B cell (primary cell): ENCODE measurements at regions of chr16 and their contacts with region 1.

Region 1: DNA sequence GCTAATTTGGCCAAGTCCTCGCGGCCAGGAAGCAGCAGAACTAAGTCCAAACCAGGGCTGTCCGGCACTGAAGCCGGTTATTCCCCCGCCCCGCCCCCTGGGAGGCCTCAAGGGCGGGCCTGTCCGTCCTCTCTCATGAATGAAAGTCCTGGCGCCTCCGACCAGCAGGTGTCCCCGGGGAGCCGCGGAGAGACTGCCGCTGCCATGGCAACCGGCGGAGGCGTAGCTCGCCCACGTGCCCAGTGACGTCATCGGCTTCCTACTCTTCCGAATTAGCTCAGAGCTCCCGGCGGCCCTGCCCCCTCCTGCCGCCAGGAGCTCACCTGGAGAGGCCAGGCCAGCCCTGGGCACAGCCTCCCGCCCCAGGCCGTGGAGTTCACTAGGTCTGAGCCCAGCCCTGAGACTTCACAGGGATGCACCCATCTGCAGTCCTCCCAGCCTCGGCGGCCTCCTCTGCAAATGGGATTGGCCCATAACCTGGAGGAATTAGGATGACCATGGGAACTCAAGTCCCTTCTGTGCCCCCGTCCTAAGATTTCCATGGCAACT is 1.3 kb downstream of the SPATA2L start:
- DNase-seq: peak; percentile 99
- ATAC-seq: peak; percentile 38
- H3K4me3 ChIP-seq: peak overlapping the region; percentile 17 to 73 (median 68)
- H3K4me3 Mint-ChIP-seq: peak overlapping the region; percentile 85
- H3K27ac ChIP-seq: peak overlapping the region; percentile 76 to 82
- H3K27ac Mint-ChIP-seq: peak overlapping the region; percentile 83
- H3K4me1 ChIP-seq: peaks cover 21 to 29% of the 10 kb centered on the region in 2 donors
- H3K4me1 Mint-ChIP-seq: peaks cover 21% of the 10 kb centered on the region
- H3K27me3 ChIP-seq: no peaks in the 10 kb centered on the region
- H3K27me3 Mint-ChIP-seq: no peaks in the 10 kb centered on the region
- CTCF ChIP-seq: peak; percentile 74

Region 2: GRCh38 chr16:89084411-89084810 is 615.8 kb before region 1 on chr16:
- CTCF ChIA-PET with region 1: no interaction called
- POLR2A ChIA-PET with region 1: no interaction called
- intact Hi-C with region 1: no loop called
- DNase-seq: no peak
- ATAC-seq: no peak
- H3K4me3 ChIP-seq: no peak overlapping the region
- H3K4me3 Mint-ChIP-seq: peak overlapping the region; percentile 73
- H3K27ac ChIP-seq: no peak overlapping the region
- H3K27ac Mint-ChIP-seq: peak overlapping the region; percentile 88
- H3K4me1 ChIP-seq: peaks cover 4 to 7% of the 10 kb centered on the region in 2 donors
- H3K4me1 Mint-ChIP-seq: peaks cover 13% of the 10 kb centered on the region
- H3K27me3 ChIP-seq: peaks cover 0 to 7% (median 2%) of the 10 kb centered on the region in 4 experiments
- H3K27me3 Mint-ChIP-seq: peaks cover 6% of the 10 kb centered on the region
- CTCF ChIP-seq: no peak

Region 3: DNA sequence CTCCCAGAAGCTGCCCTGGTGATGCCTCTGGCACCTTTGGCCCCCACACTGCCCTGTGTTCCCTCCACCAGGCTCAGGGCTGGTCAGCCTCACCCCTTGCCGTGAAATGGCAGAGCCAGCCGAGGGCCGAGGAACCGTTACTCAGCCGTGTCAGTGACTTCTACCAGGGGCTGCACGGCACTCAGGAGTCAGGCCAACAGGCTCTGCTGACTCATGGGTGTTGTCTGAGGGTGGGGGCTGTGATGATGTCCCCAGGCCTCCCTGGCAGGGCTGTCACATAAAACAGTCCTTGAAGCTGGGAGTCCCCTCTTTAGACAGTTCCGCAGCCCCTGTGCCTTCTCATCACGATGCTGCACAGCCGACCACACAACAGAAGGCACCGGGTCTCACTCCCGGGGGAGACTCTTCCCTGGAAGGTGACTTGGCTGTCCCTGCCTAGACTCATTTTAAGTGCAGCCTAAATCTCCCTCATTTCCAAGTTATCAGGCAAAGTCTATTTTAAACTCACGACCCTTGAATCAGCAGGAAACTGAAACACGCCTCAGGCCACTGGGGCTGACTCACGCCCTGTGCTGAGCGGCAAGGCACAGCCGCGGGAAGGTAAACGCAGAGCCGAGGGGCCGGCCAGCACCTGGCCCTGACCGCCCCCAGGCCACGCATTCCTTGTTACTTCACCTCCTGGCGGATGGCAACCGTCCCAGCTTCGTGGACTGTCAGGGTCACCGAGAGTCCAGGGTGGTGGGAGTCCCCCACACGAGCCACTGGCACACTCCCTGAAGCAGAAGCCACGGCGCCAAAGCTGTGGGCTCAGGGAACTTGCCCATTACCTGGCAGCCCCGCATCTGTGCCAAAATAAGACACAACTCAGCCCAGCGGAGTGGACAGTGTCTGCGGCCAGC is 380.0 kb before region 1 on chr16:
- CTCF ChIA-PET with region 1: no interaction called
- POLR2A ChIA-PET with region 1: no interaction called
- intact Hi-C with region 1: no loop called
- DNase-seq: no peak
- ATAC-seq: no peak
- H3K4me3 ChIP-seq: no peak overlapping the region
- H3K4me3 Mint-ChIP-seq: peak overlapping the region; percentile 66
- H3K27ac ChIP-seq: no peak overlapping the region
- H3K27ac Mint-ChIP-seq: peak overlapping the region; percentile 50
- H3K4me1 ChIP-seq: peaks cover 45 to 83% of the 10 kb centered on the region in 2 donors
- H3K4me1 Mint-ChIP-seq: peaks cover 90% of the 10 kb centered on the region
- H3K27me3 ChIP-seq: no peaks in the 10 kb centered on the region
- H3K27me3 Mint-ChIP-seq: no peaks in the 10 kb centered on the region
- CTCF ChIP-seq: no peak

Region 4: DNA sequence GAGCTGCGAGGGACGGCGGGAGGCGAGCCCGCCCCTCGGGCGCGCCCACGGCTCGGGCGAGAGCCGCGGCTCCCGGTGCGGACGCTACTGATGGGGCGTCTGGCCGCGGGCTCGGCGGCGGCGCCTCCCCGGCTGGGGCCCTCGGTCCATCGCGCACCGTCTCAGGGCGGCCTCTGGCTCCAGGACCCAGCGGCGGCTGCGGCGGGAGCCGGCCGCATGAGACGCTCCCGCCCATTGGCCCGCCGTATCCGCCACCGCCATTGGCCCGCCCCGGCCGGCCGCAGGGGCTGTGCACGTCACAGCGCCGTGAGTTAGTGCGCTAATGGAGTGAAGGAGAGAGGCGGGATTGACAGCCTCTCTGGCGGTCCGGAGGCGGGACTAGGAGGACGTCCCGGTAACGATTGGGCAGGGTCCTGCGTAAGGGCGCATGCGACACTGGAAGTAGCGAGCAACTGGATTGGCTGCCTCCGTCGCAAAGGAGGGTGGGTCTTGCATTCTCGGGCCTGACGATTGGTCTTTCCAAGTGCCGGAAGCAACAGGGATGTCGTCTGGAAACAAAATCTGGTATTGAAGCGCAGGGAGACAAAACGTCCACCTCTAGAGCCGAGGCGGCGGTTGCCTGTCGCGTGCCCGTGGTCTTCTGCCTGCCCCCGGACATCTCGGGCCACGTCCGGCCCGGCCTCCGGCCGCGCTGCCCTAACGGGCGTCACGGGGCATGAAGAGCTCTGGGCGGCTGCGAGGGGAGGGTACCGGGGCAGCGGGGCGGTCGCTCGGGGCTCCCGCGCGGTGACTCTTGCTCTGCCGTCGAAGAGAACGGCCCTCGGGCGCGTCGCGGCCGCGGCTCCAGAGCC is 209.6 kb before region 1 on chr16 and contains the start of gene ANKRD11:
- CTCF ChIA-PET with region 1: no interaction called
- POLR2A ChIA-PET with region 1: interaction called, 3 read pairs
- intact Hi-C with region 1: loop called (anchors 5 kb)
- DNase-seq: peak; percentile 99
- ATAC-seq: peak; percentile 81
- H3K4me3 ChIP-seq: peak within 1 kb of the TSS; percentile 59 to 93 (median 86)
- H3K4me3 Mint-ChIP-seq: peak within 1 kb of the TSS; percentile 93
- H3K27ac ChIP-seq: peak within 1 kb of the TSS; percentile 91 to 97
- H3K27ac Mint-ChIP-seq: peak within 1 kb of the TSS; percentile 97
- H3K4me1 ChIP-seq: peaks cover 41 to 46% of the 10 kb centered on the region in 2 donors
- H3K4me1 Mint-ChIP-seq: peaks cover 56% of the 10 kb centered on the region
- H3K27me3 ChIP-seq: no peaks in the 10 kb centered on the region
- H3K27me3 Mint-ChIP-seq: no peaks in the 10 kb centered on the region
- CTCF ChIP-seq: no peak
- total RNA-seq, gene ANKRD11: 314 and 320 TPM in 2 replicates

Region 5: GRCh38 chr16:89545831-89546574 is 154.2 kb before region 1 on chr16:
- CTCF ChIA-PET with region 1: no interaction called
- POLR2A ChIA-PET with region 1: no interaction called
- intact Hi-C with region 1: no loop called
- DNase-seq: no peak
- ATAC-seq: no peak
- H3K4me3 ChIP-seq: no peak overlapping the region
- H3K4me3 Mint-ChIP-seq: no peak overlapping the region
- H3K27ac ChIP-seq: no peak overlapping the region
- H3K27ac Mint-ChIP-seq: no peak overlapping the region
- H3K4me1 ChIP-seq: peaks cover 0 to 3% of the 10 kb centered on the region in 2 donors
- H3K4me1 Mint-ChIP-seq: peaks cover 2% of the 10 kb centered on the region
- H3K27me3 ChIP-seq: no peaks in the 10 kb centered on the region
- H3K27me3 Mint-ChIP-seq: no peaks in the 10 kb centered on the region
- CTCF ChIP-seq: no peak

Region 6: DNA sequence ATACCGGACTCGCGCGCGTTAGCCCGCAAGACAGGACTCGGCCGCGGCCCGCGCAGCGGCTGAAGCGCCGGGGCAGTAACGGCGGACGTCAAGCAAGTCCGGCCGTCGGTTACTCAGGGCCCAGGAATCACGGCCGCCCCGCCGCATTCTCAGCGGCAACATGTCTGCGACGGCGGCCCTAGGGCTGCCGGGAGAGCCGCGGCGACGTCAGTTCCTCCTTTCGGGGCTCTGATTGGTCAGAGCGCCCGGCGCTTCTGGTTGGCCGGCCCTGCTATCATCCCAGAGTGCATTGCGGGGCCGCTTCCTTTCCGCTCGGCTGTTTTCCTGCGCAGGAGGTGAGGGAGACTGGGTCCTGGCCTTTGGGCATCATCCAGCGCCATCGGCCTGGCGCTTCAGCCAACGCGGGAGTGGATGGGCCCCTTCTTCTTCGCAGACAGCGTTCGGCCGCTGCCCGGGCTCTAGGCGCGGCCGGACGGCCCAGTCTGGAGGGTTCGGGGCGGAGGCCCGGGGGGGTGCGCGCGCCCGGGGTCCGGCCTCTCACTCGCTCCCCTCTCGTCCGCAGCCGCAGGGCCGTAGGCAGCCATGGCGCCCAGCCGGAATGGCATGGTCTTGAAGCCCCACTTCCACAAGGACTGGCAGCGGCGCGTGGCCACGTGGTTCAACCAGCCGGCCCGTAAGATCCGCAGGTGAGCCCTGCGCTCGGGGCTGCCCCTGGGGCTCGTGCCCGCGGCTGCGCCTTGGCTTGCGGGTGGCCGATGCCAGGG is 139.6 kb before region 1 on chr16 and contains the start of gene RPL13:
- CTCF ChIA-PET with region 1: no interaction called
- POLR2A ChIA-PET with region 1: no interaction called
- intact Hi-C with region 1: no loop called
- DNase-seq: peak; percentile 95
- ATAC-seq: peak; percentile 94
- H3K4me3 ChIP-seq: peak within 1 kb of the TSS; percentile 54 to 99 (median 92)
- H3K4me3 Mint-ChIP-seq: peak within 1 kb of the TSS; percentile 92
- H3K27ac ChIP-seq: peak within 1 kb of the TSS; percentile 82 to 91
- H3K27ac Mint-ChIP-seq: peak within 1 kb of the TSS; percentile 95
- H3K4me1 ChIP-seq: peaks cover 36 to 41% of the 10 kb centered on the region in 2 donors
- H3K4me1 Mint-ChIP-seq: peaks cover 43% of the 10 kb centered on the region
- H3K27me3 ChIP-seq: no peaks in the 10 kb centered on the region
- H3K27me3 Mint-ChIP-seq: no peaks in the 10 kb centered on the region
- CTCF ChIP-seq: no peak
- total RNA-seq, gene RPL13: 3,172 and 3,184 TPM in 2 replicates

Region 7: GRCh38 chr16:89686520-89687091 is 13.6 kb before region 1 on chr16 and contains the start of gene CDK10:
- CTCF ChIA-PET with region 1: interaction called, 8 read pairs
- POLR2A ChIA-PET with region 1: interaction called, 8 read pairs
- intact Hi-C with region 1: loop called (anchors 1 kb)
- DNase-seq: peak; percentile 94
- ATAC-seq: peak; percentile 90
- H3K4me3 ChIP-seq: peak within 1 kb of the TSS; percentile 52 to 96 (median 78)
- H3K4me3 Mint-ChIP-seq: peak within 1 kb of the TSS; percentile 96
- H3K27ac ChIP-seq: peak within 1 kb of the TSS; percentile 54 to 83
- H3K27ac Mint-ChIP-seq: peak within 1 kb of the TSS; percentile 97
- H3K4me1 ChIP-seq: peaks cover 7 to 15% of the 10 kb centered on the region in 2 donors
- H3K4me1 Mint-ChIP-seq: peaks cover 18% of the 10 kb centered on the region
- H3K27me3 ChIP-seq: no peaks in the 10 kb centered on the region
- H3K27me3 Mint-ChIP-seq: no peaks in the 10 kb centered on the region
- CTCF ChIP-seq: no peak
- total RNA-seq, gene CDK10: 114 and 119 TPM in 2 replicates

Region 8: DNA sequence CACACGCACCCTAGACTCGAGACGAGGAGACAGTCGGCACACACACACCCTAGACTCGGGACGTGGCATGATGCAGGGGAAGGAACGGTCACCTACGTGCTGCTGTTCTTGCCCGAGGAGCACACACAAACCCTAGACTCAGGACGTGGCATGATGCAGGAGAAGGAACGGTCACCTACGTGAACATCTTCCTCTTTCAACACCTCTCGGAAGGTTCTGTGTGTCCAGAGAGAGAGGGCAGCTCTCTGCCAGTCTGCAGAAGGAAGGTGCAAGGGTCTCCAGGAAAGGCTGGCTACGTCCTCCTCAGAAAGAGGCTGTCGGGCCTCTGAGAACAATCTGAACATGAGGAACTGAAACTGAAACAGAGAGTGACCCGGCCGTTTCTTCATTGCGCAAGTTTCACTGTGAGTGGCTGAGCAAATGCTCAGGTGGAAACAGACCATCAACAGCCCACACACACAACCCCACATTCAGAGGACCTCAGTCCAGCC is 64.6 kb after region 1 on chr16:
- CTCF ChIA-PET with region 1: interaction called, 10 read pairs
- POLR2A ChIA-PET with region 1: interaction called, 3 read pairs
- intact Hi-C with region 1: loop called (anchors 10 kb)
- DNase-seq: peak; percentile 89
- ATAC-seq: peak; percentile 88
- H3K4me3 ChIP-seq: peak overlapping the region; percentile 35 to 76 (median 56)
- H3K4me3 Mint-ChIP-seq: peak overlapping the region; percentile 95
- H3K27ac ChIP-seq: peak overlapping the region; percentile 67 to 86
- H3K27ac Mint-ChIP-seq: peak overlapping the region; percentile 97
- H3K4me1 ChIP-seq: peaks cover 37 to 52% of the 10 kb centered on the region in 2 donors
- H3K4me1 Mint-ChIP-seq: peaks cover 51% of the 10 kb centered on the region
- H3K27me3 ChIP-seq: no peaks in the 10 kb centered on the region
- H3K27me3 Mint-ChIP-seq: no peaks in the 10 kb centered on the region
- CTCF ChIP-seq: no peak

Region 9: GRCh38 chr16:89815639-89816348 is 115.6 kb after region 1 on chr16:
- CTCF ChIA-PET with region 1: no interaction called
- POLR2A ChIA-PET with region 1: no interaction called
- intact Hi-C with region 1: loop called (anchors 1 kb)
- DNase-seq: peak; percentile 44
- ATAC-seq: no peak
- H3K4me3 ChIP-seq: peak overlapping the region; percentile 33 to 76 (median 45)
- H3K4me3 Mint-ChIP-seq: peak overlapping the region; percentile 85
- H3K27ac ChIP-seq: no peak overlapping the region
- H3K27ac Mint-ChIP-seq: peak overlapping the region; percentile 62
- H3K4me1 ChIP-seq: peaks cover 5 to 12% of the 10 kb centered on the region in 2 donors
- H3K4me1 Mint-ChIP-seq: peaks cover 6% of the 10 kb centered on the region
- H3K27me3 ChIP-seq: peaks cover 0 to 5% (median 0%) of the 10 kb centered on the region in 4 experiments
- H3K27me3 Mint-ChIP-seq: no peaks in the 10 kb centered on the region
- CTCF ChIP-seq: no peak